Breast epithelium (tissue), 4 donors: ENCODE measurements at regions of chr5 and their contacts with region 1.

Region 1: DNA sequence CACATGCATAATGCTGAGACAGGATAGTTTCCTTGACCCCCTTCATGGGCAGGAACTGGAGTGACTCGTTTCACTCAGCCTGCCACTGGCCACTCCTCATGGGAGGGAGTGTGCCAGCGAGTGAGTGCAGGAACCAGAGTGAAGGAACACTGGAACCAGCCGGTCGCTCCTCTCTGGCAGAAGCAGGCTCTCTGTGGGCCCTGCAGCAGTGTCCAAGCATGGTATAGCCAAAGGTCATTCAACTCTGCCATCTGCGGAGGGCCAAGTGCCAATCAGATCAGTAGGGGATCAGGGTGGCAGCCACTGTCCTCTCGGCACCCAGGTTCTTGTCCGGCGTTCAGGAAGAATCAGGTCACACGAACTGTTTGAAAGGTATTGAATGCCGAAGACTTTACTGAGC is 169.3 kb upstream of the PPP1R2B start:
- DNase-seq: no peak
- H3K4me3 ChIP-seq: no peak overlapping the region
- H3K27ac ChIP-seq: no peak overlapping the region
- H3K4me1 ChIP-seq: no peaks in the 10 kb centered on the region
- H3K27me3 ChIP-seq: no peaks in the 10 kb centered on the region
- CTCF ChIP-seq: no peak
- POLR2A ChIP-seq: no peak

Region 2: GRCh38 chr5:156640691-156641241 is 40.1 kb before region 1 on chr5:
- intact Hi-C with region 1: loop called (anchors 2 kb)
- DNase-seq: no peak
- H3K4me3 ChIP-seq: no peak overlapping the region
- H3K27ac ChIP-seq: no peak overlapping the region
- H3K4me1 ChIP-seq: no peaks in the 10 kb centered on the region
- H3K27me3 ChIP-seq: no peaks in the 10 kb centered on the region
- CTCF ChIP-seq: no peak
- POLR2A ChIP-seq: no peak

Region 3: GRCh38 chr5:156815988-156816599 is 135.3 kb after region 1 on chr5:
- intact Hi-C with region 1: no loop called
- DNase-seq: no peak
- H3K4me3 ChIP-seq: no peak overlapping the region
- H3K27ac ChIP-seq: no peak overlapping the region
- H3K4me1 ChIP-seq: no peaks in the 10 kb centered on the region
- H3K27me3 ChIP-seq: no peaks in the 10 kb centered on the region
- CTCF ChIP-seq: no peak
- POLR2A ChIP-seq: no peak